ENCODE measurements at regions of chr3 and their contacts with region 1.

Region 1: DNA sequence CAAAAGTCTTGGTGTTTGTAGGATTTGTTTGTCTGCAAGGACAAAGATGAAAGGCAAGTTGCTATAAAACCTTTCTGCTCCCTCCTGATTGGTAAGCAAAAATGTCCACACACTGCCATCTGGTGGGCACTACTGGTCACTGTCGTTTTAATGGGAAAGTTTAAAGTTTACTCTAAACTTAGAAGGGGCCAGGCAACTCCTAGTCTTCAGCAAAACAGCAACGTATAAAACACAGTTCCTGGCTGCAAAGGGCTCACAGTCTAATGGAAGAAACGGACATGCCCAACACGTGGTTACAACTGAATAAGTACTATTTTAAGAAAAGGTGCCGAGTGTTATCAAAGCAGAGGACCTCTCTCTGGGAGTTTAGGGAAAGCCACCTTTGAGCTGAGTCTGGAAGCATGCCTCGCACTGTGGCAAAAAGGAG is 23.7 kb upstream of the TPRG1 start:
- DNase-seq: peak; percentile 85
- H3K4me3 Mint-ChIP-seq: no peak overlapping the region
- H3K27ac Mint-ChIP-seq: no peak overlapping the region
- H3K4me1 Mint-ChIP-seq: peaks cover 9% of the 10 kb centered on the region
- H3K27me3 Mint-ChIP-seq: peaks cover 9% of the 10 kb centered on the region

Region 2: GRCh38 chr3:188389711-188390342 is 758.3 kb before region 1 on chr3:
- CTCF ChIA-PET with region 1: no interaction called
- intact Hi-C with region 1: loop called (anchors 10 kb)
- DNase-seq: peak; percentile 85
- H3K4me3 Mint-ChIP-seq: no peak overlapping the region
- H3K27ac Mint-ChIP-seq: peak overlapping the region; percentile 67
- H3K4me1 Mint-ChIP-seq: peaks cover 39% of the 10 kb centered on the region
- H3K27me3 Mint-ChIP-seq: no peaks in the 10 kb centered on the region

Region 3: GRCh38 chr3:188664795-188665194 is 483.3 kb before region 1 on chr3:
- CTCF ChIA-PET with region 1: no interaction called
- intact Hi-C with region 1: loop called (anchors 5 kb)
- DNase-seq: peak; percentile 40
- H3K4me3 Mint-ChIP-seq: no peak overlapping the region
- H3K27ac Mint-ChIP-seq: no peak overlapping the region
- H3K4me1 Mint-ChIP-seq: peaks cover 5% of the 10 kb centered on the region
- H3K27me3 Mint-ChIP-seq: no peaks in the 10 kb centered on the region

Region 4: GRCh38 chr3:189041482-189042090 is 106.5 kb before region 1 on chr3:
- CTCF ChIA-PET with region 1: interaction called, 10 read pairs
- intact Hi-C with region 1: loop called (anchors 1 kb)
- DNase-seq: peak; percentile 90
- H3K4me3 Mint-ChIP-seq: no peak overlapping the region
- H3K27ac Mint-ChIP-seq: no peak overlapping the region
- H3K4me1 Mint-ChIP-seq: peaks cover 29% of the 10 kb centered on the region
- H3K27me3 Mint-ChIP-seq: peaks cover 3% of the 10 kb centered on the region

Region 5: GRCh38 chr3:189233225-189233858 is 85.2 kb after region 1 on chr3:
- CTCF ChIA-PET with region 1: no interaction called
- intact Hi-C with region 1: loop called (anchors 1 kb)
- DNase-seq: peak; percentile 48
- H3K4me3 Mint-ChIP-seq: no peak overlapping the region
- H3K27ac Mint-ChIP-seq: no peak overlapping the region
- H3K4me1 Mint-ChIP-seq: peaks cover 4% of the 10 kb centered on the region
- H3K27me3 Mint-ChIP-seq: no peaks in the 10 kb centered on the region